Gastrocnemius medialis (tissue), 4 donors: ENCODE measurements at regions of chr15 and their contacts with region 1.

Region 1: GRCh38 chr15:94119923-94120775 is 111.2 kb upstream of the MCTP2 start:
- DNase-seq: peak; percentile 42 to 66
- ATAC-seq: peak; percentile 100
- H3K4me3 ChIP-seq: no peak overlapping the region
- H3K27ac ChIP-seq: peak overlapping the region; percentile 24 to 67 (median 46)
- H3K4me1 ChIP-seq: peaks cover 4 to 9% of the 10 kb centered on the region in 2 donors
- H3K27me3 ChIP-seq: no peaks in the 10 kb centered on the region
- CTCF ChIP-seq: peak; percentile 75 to 97 (median 85)
- POLR2A ChIP-seq: no peak

Region 2: DNA sequence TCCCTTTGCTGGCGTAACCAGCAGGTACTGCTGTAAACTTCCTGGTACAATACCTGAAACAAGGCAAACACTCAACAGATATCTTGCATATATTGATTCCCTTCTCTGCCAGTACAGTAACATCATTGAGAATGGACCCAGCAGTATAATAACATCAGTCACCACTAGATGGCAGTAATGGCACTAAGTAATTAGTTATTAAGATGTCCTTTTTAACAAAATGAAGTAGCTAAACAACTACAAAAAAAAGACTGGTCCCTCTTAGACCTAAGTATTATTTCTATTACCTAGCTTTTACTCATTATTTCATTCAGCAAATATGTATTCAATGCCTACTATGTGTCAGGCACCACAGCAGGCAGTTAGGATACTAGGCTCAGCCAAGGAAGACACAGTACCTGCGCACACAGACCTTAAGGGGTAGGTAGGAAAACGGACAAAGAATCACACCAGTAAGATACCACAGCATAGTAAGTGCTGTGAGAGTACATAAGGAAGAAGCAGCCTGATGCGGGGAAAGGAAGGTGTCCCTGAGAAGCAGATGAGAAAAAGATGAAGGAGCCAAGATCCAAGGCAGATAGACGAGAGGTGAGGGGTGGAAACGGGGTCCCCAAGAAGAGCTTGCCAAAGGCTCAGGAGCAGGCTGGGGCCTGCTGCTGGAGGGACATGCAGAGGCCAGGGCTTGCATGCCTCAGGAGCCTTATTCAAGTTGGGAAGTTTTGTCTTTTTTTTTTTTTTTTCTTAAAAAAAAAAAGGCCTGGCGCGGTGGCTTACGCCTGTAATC is 1322.8 kb before region 1 on chr15:
- in situ Hi-C with region 1: loop called (anchors 10 to 25 kb)
- intact Hi-C with region 1: loop called (anchors 1 kb)
- DNase-seq: no peak
- ATAC-seq: peak; percentile 68 to 80
- H3K4me3 ChIP-seq: no peak overlapping the region
- H3K27ac ChIP-seq: peak overlapping the region; percentile 72 to 82 (median 79)
- H3K4me1 ChIP-seq: peaks cover 11 to 14% of the 10 kb centered on the region in 2 donors
- H3K27me3 ChIP-seq: no peaks in the 10 kb centered on the region
- CTCF ChIP-seq: peak; percentile 75 to 84 (median 78)
- POLR2A ChIP-seq: no peak

Region 3: DNA sequence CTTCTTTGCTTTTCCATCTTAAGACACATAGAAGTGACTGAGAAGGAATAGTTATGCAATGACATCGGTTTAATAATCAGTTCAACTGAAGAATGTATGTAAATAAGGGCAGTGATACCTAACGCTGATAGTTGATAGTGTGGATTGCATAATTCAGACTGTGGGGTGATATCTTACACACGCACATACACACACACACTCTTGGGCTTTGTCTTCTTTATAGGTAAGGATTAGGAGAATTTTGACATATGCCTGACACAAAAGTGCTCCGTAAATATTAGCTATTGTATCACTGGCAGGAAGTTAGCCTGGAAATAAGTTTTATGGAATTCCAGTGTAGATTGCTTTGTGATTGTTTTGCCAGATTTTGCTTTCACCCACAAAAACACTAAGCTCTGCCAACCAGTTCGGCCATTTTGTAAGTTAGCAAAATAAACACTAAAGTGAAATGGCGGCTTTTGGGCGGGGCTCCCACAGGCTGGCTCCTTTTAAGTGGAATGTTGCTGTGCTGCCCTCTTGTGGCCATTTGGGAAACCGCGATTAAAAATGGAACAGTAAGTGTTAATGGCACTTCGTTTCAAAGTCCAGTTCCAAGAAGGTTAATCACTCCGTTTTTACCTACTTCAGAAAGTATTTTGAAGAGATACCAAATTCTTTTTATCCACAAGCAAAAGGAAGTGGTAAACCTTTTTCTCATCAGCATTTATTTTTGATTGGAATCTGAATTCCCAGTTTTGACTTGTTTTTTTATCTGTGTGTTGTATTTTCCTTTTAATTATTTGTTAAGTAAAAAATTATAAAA is 1202.3 kb before region 1 on chr15:
- in situ Hi-C with region 1: no loop called
- intact Hi-C with region 1: loop called (anchors 5 kb)
- DNase-seq: peak; percentile 87 to 94
- ATAC-seq: peak; percentile 57 to 64
- H3K4me3 ChIP-seq: peak overlapping the region; percentile 3 to 21 (median 12)
- H3K27ac ChIP-seq: peak overlapping the region; percentile 91 to 97 (median 96)
- H3K4me1 ChIP-seq: peaks cover 86 to 91% of the 10 kb centered on the region in 2 donors
- H3K27me3 ChIP-seq: no peaks in the 10 kb centered on the region
- CTCF ChIP-seq: peak; percentile 88 to 98 (median 95)
- POLR2A ChIP-seq: no peak

Region 4: GRCh38 chr15:93035953-93036800 is 1084.0 kb before region 1 on chr15:
- in situ Hi-C with region 1: loop called in 3 of 4 experiments (anchors 5 to 10 kb)
- intact Hi-C with region 1: no loop called
- DNase-seq: peak in 1 of 2 donors; percentile 51
- ATAC-seq: peak; percentile 24 to 35
- H3K4me3 ChIP-seq: no peak overlapping the region
- H3K27ac ChIP-seq: peak overlapping the region in 1 of 4 donors; percentile 68
- H3K4me1 ChIP-seq: peaks cover 10 to 18% of the 10 kb centered on the region in 2 donors
- H3K27me3 ChIP-seq: no peaks in the 10 kb centered on the region
- CTCF ChIP-seq: peak; percentile 15 to 66 (median 60)
- POLR2A ChIP-seq: no peak

Region 5: DNA sequence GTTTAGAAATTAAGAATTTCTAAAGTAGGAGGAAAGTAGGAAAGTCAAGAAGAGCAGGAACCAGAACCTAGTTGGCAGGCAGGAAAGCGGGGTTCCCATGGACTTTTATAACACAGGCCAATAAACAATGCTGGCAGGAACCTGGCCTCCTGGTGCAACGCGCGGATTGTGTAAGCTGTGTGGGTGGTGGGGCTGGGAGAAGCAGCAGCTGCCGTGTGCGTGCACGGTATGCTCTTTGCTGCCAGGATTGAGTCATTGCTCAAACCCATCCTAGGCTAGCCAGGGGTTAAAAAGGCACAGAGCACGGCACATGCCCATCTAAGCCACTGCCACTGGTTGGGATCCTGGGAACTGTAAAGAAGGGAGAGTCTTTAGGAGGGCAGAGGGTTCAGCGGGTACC is 821.2 kb before region 1 on chr15:
- in situ Hi-C with region 1: loop called in 1 of 4 experiments (anchors 25 kb)
- intact Hi-C with region 1: no loop called
- DNase-seq: peak; percentile 7 to 68
- ATAC-seq: peak; percentile 66 to 82
- H3K4me3 ChIP-seq: no peak overlapping the region
- H3K27ac ChIP-seq: no peak overlapping the region
- H3K4me1 ChIP-seq: no peaks in the 10 kb centered on the region
- H3K27me3 ChIP-seq: no peaks in the 10 kb centered on the region
- CTCF ChIP-seq: no peak
- POLR2A ChIP-seq: no peak

Region 6: DNA sequence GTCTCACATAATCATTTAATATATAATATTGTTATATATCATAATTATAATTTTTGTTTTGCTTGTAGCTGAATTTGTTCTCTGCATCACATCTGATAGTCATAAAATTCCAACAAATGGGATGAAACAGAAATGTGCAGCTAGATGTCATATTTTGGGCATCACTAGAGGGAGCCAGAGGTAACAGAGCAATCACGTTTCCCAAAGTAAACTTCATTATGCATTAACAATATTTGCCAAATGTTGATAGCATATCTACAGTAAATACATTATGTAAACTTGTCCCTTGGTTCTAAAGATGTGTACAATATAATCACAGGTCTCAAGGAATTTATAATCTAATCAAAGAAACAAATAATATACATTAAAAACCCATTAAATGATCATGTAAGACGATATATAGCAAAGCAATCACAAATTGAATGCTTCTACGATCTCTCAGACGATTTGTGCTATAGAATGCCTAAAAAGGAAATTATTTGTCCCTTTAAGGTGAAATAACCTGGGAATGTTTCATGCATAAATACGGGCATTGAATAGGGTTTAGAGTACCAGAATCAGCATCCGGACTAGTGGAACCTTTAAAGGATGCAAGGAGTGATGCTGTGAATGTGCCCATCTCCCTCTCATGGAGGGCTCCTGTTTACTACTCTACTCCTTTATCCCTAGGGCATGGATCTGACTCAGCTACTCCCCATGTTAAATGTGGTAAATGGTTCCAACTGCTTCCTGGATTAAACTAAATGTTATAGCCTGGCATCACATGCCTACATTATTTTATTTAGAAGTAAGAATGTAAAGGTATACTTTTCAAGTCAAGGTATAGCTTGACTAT is 122.8 kb before region 1 on chr15:
- in situ Hi-C with region 1: loop called in 1 of 4 experiments (anchors 10 kb)
- intact Hi-C with region 1: loop called (anchors 5 kb)
- DNase-seq: no peak
- ATAC-seq: no peak
- H3K4me3 ChIP-seq: no peak overlapping the region
- H3K27ac ChIP-seq: no peak overlapping the region
- H3K4me1 ChIP-seq: peaks cover 0 to 15% of the 10 kb centered on the region in 2 donors
- H3K27me3 ChIP-seq: no peaks in the 10 kb centered on the region
- CTCF ChIP-seq: peak in 4 of 5 experiments; percentile 18 to 57 (median 39)
- POLR2A ChIP-seq: no peak

Region 7: GRCh38 chr15:94327344-94327936 is 207.3 kb after region 1 on chr15:
- in situ Hi-C with region 1: no loop called
- intact Hi-C with region 1: no loop called
- DNase-seq: no peak
- ATAC-seq: no peak
- H3K4me3 ChIP-seq: no peak overlapping the region
- H3K27ac ChIP-seq: no peak overlapping the region
- H3K4me1 ChIP-seq: no peaks in the 10 kb centered on the region
- H3K27me3 ChIP-seq: no peaks in the 10 kb centered on the region
- CTCF ChIP-seq: peak in 3 of 5 experiments; percentile 14 to 51 (median 17)
- POLR2A ChIP-seq: no peak